MCF 10A (cell line): ENCODE measurements at regions of chr1 and their contacts with region 1.

Region 1: DNA sequence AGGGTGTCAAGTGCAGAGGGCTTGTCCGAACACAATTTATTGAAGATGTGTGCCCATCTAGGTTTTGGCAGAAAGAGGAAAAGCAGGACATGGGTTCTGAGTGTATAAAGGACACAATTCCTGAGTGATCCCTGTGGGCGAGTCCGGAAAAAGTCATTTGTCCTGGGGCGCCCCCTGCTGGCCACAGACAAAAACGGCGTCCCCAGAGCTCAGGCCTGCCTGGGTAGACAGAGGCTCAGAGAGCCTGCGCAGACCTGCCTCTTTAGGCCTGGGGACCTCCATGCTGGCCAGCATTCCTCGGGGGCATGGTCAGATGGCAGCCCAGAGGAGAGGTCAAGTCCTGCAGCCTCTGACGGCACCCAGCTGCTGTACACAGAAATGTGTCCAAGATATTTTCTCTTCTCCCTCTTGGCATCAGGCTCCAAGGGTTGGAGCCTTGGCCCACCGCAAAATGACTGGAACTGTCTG is 65.5 kb upstream of the LRP8 start:
- DNase-seq: peak; percentile 80
- H3K4me3 Mint-ChIP-seq: no peak overlapping the region
- H3K27ac Mint-ChIP-seq: no peak overlapping the region
- H3K4me1 Mint-ChIP-seq: peaks cover 6% of the 10 kb centered on the region
- H3K27me3 Mint-ChIP-seq: peaks cover 13% of the 10 kb centered on the region
- CTCF ChIP-seq: peak; percentile 89

Region 2: DNA sequence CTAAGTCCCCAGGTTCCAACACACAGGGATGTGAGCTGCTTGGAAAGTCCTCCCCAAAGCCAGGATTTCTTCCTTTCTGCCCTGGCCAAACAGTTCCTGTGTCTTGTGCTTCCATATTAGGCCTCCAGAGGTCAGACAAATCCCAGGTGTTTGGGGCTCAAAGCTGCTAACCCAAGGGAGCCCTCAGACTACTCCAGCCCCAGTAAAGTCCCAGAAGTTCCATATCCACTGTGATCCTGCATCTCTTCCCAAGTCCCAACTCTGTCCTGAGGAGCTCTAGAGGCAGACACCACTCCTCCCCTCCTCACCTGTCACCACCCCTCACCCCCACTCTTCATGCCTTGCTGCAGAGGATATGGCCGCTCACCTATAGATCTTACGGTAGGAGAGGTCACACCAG is 127.3 kb before region 1 on chr1:
- CTCF ChIA-PET with region 1: interaction called, 26 read pairs
- POLR2A ChIA-PET with region 1: no interaction called
- intact Hi-C with region 1: no loop called
- DNase-seq: peak; percentile 34
- H3K4me3 Mint-ChIP-seq: no peak overlapping the region
- H3K27ac Mint-ChIP-seq: no peak overlapping the region
- H3K4me1 Mint-ChIP-seq: no peaks in the 10 kb centered on the region
- H3K27me3 Mint-ChIP-seq: no peaks in the 10 kb centered on the region
- CTCF ChIP-seq: peak; percentile 25

Region 3: GRCh38 chr1:53272349-53273315 is 120.7 kb before region 1 on chr1:
- CTCF ChIA-PET with region 1: interaction called, 227 read pairs
- POLR2A ChIA-PET with region 1: interaction called, 10 read pairs
- intact Hi-C with region 1: no loop called
- DNase-seq: no peak
- H3K4me3 Mint-ChIP-seq: no peak overlapping the region
- H3K27ac Mint-ChIP-seq: peak overlapping the region; percentile 69
- H3K4me1 Mint-ChIP-seq: peaks cover 15% of the 10 kb centered on the region
- H3K27me3 Mint-ChIP-seq: no peaks in the 10 kb centered on the region
- CTCF ChIP-seq: no peak

Region 4: GRCh38 chr1:53326088-53326597 is 67.2 kb before region 1 on chr1:
- CTCF ChIA-PET with region 1: no interaction called
- POLR2A ChIA-PET with region 1: no interaction called
- intact Hi-C with region 1: loop called (anchors 1 kb)
- DNase-seq: peak; percentile 96
- H3K4me3 Mint-ChIP-seq: peak overlapping the region; percentile 82
- H3K27ac Mint-ChIP-seq: peak overlapping the region; percentile 95
- H3K4me1 Mint-ChIP-seq: no peaks in the 10 kb centered on the region
- H3K27me3 Mint-ChIP-seq: no peaks in the 10 kb centered on the region
- CTCF ChIP-seq: no peak

Region 5: GRCh38 chr1:53359225-53359923 is 34.0 kb before region 1 on chr1:
- CTCF ChIA-PET with region 1: interaction called, 17 read pairs
- POLR2A ChIA-PET with region 1: no interaction called
- intact Hi-C with region 1: no loop called
- DNase-seq: no peak
- H3K4me3 Mint-ChIP-seq: no peak overlapping the region
- H3K27ac Mint-ChIP-seq: no peak overlapping the region
- H3K4me1 Mint-ChIP-seq: peaks cover 5% of the 10 kb centered on the region
- H3K27me3 Mint-ChIP-seq: peaks cover 11% of the 10 kb centered on the region
- CTCF ChIP-seq: no peak

Region 6: DNA sequence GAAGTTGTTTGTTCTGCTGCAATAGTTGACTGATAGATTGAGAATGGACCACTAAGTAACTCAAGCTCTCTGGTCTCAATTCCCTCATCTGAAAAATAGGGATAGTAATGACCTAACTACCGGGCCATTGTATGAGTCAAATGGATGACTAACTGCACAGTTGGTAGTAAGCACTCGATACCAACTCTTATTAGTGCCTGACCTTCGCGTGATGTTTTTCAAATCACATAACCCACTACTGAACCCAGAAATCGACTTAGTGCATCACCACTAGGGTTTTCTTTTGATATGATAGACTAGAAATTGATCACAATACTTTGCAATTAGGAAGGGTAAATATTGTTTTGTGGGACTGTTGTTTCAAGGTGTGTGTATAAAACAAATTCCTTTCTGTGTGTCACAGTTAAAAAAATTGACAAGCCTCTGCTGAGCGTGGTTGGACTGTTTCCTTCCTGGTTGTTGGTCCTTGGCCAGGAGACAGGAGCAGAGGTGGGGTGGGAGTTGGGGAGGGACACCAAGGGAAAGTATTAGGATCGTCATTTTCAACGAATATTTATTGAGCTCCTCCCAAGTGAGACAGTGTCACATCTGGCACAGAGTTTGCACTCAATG is 11.5 kb before region 1 on chr1:
- CTCF ChIA-PET with region 1: interaction called, 12 read pairs
- POLR2A ChIA-PET with region 1: no interaction called
- intact Hi-C with region 1: no loop called
- DNase-seq: peak; percentile 64
- H3K4me3 Mint-ChIP-seq: no peak overlapping the region
- H3K27ac Mint-ChIP-seq: no peak overlapping the region
- H3K4me1 Mint-ChIP-seq: peaks cover 15% of the 10 kb centered on the region
- H3K27me3 Mint-ChIP-seq: no peaks in the 10 kb centered on the region
- CTCF ChIP-seq: no peak